Head of caudate nucleus (tissue), 42 donors: ENCODE measurements at regions of chr17 and their contacts with region 1.

Region 1: GRCh38 chr17:55264645-55265298 is at the start of gene HLF:
- DNase-seq: peak; percentile 48 to 94 (median 88)

Region 2: GRCh38 chr17:55238179-55238930 is 26.4 kb before region 1 on chr17:
- intact Hi-C with region 1: loop called (anchors 2 kb)
- DNase-seq: peak; percentile 90 to 98 (median 96)